ENCODE measurements at regions of chr3 and their contacts with region 1.

Region 1: GRCh38 chr3:64187065-64187959 is 38.0 kb downstream of the PRICKLE2 start:
- DNase-seq: peak; percentile 52

Region 2: DNA sequence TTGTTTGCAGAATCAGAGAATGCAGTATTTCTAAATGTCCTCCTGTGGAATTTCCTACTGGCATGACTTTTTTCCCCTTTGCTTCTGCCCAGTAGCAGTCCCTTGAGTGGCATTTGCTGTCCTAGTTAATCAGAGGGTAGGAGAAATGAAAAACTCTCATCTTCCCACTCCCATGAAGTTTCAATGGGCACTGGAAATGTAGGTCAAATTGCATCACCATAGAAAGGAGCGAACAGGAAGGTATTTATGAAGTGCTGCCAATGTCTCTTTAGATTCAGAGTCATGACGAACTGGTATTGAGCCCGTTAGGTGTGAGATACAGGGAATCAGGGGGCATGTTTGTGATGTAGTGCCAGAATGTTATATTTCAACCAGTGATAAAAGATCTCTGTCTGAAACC is 300.5 kb before region 1 on chr3:
- in situ Hi-C with region 1: no loop called
- DNase-seq: no peak

Region 3: GRCh38 chr3:64030741-64031140 is 156.6 kb before region 1 on chr3:
- in situ Hi-C with region 1: loop called (anchors 25 kb)
- DNase-seq: peak; percentile 74

Region 4: DNA sequence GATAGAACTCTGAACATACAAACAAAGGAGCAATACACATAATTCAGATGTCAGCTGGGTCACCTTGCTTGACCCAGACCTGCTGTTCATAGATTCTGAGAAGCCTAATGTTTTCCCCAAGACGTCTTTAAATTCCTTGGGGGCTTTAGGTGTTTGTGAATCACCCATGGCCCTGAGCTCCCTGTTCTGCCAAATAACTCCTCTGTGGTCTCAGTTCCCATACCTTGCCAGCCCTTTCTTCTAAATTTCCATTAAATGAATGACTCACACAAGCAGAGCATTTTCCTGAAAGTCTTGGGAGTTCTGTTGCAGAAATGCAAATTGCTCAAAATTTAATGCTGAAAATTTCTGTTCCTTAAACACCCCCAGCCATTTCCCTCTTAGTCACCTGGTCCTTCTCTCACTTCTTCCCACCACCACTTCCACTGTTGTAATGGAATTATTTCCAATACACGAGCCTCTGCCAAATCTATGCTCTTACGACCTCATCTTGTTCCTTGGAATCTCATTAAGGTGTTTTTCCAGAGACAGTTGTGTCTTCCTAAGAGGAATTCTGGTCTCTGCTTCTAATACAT is 130.6 kb before region 1 on chr3:
- in situ Hi-C with region 1: no loop called
- DNase-seq: no peak